Calu3 (cell line): ENCODE measurements at regions of chr6 and their contacts with region 1.

Region 1: GRCh38 chr6:3929281-3929798 is 80.2 kb downstream of the FAM50B start:
- DNase-seq: no peak
- H3K4me3 Mint-ChIP-seq: no peak overlapping the region
- H3K27ac Mint-ChIP-seq: no peak overlapping the region
- H3K4me1 Mint-ChIP-seq: peaks cover 16% of the 10 kb centered on the region
- H3K27me3 Mint-ChIP-seq: no peaks in the 10 kb centered on the region
- CTCF ChIP-seq: no peak

Region 2: DNA sequence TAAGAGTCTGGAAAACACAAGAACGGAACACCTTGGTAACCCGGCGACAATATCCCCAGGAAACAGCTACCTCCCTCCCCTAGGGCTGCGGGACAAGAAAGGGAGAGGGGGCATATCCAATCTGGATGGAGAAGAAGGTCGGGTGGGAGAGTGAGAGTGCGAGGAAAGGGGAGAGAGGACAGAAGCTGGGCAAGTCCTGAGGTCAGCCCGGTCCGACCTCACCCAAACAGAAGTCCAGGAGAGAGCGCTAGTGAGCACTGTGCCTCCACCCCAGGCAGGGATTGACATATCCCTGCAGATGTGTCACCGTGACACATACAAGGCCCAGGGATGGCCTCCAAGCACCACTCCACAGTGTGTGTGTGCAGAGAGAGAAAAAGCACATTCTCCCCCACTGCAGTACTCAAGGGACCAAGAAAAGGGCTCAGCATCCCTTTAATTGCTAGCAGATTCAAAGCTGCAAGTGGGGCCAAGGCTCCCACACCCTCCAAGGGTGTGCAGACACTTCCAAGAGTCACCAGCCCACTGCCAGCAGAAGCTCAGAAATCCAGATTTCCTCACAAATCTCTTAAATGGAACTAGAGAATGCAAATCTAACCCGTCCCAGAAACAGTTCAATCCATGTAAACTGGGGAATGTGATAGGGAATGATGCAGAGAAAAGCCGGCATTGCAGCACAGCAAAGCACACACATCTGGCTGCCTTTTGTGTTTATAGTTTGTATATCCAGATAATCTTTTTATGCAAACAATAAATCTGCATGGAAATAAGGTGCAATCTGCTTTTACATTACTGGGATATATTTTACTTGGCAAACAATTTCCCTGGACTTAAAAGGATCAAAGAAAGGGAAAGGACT is 180.9 kb before region 1 on chr6:
- CTCF ChIA-PET with region 1: interaction called, 10 read pairs
- intact Hi-C with region 1: loop called (anchors 2 kb)
- DNase-seq: peak; percentile 70
- H3K4me3 Mint-ChIP-seq: peak overlapping the region; percentile 85
- H3K27ac Mint-ChIP-seq: peak overlapping the region; percentile 65
- H3K4me1 Mint-ChIP-seq: peaks cover 34% of the 10 kb centered on the region
- H3K27me3 Mint-ChIP-seq: no peaks in the 10 kb centered on the region
- CTCF ChIP-seq: peak; percentile 15

Region 3: DNA sequence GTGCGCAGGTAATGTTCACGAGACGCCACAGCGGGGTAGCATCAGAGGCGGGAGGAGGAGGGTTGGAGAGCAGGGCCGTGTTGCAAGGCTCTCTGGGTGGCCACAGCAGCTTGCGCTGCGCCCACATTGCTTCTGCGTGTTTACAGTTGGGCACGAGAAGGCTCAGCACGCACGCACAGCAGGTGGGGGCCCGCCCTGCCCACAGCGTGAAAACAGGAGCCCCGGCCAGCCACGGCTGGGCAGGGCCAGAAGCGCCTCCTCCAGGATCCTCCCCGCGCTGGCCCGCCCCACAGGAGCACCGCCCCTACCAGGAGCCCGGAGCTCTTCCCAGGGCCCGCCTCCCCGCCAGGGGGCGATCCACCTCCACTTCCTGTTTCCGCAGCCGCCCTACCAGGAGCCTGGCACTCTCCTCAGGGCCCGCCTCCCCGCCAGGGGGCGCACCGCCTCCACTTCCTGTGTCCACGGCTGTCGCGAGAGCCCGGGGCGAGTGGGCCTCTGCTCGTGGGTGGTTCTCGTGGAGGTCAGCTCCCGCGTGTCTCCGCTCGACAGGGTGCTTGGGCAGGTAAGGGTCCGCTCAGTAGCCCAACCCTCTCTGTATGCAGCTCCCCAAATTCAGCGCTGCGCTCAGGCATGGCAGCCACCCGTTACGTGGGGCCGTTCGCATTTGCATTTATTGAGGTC is 80.3 kb before region 1 on chr6 and contains the start of gene FAM50B:
- CTCF ChIA-PET with region 1: interaction called, 31 read pairs
- intact Hi-C with region 1: no loop called
- DNase-seq: peak; percentile 89
- H3K4me3 Mint-ChIP-seq: peak within 1 kb of the TSS; percentile 66
- H3K27ac Mint-ChIP-seq: no peak within 1 kb of the TSS
- H3K4me1 Mint-ChIP-seq: peaks cover 9% of the 10 kb centered on the region
- H3K27me3 Mint-ChIP-seq: no peaks in the 10 kb centered on the region
- CTCF ChIP-seq: peak; percentile 73
- total RNA-seq, gene FAM50B: 5.8 and 7.8 TPM in 2 replicates

Region 4: DNA sequence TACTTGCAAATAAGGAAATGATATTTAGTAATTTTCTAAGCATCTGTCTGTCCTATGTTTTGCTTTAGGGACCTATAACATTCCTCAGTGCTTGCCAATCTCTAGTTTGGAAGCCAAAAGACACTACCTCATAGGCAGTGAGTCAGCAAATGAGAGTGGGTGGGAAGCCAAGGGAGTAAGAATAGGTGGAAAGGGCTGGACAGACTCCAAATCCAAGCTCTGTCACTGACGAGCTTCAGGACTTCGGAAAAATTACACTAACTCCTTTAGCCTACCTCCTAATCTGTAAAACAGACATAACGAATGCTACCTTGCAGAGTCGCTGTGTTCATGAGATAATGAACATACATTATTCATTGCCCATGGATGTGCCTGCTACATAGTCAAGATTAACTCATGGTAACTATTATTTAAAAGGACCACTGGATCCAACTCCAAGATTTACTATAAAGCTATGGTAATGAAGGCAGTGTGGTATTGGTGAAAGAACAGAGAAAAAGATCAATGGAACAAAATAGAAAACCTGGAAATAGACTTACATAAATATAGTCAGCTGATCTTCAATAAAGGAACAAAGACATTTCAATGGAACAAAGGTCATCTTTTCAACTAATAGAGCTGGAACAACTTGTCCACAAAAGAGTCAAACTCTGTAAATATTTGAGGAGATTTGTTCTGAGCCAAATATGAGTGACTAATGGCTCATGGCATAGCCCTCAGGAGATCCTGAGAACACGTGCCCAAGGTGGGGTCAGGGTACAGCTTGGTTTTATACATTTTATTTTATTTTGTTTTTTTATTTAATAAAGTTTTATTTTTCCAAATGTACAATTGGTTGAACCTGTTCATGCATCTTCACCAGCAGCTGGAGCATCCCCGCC is 16.0 kb before region 1 on chr6:
- CTCF ChIA-PET with region 1: interaction called, 13 read pairs
- intact Hi-C with region 1: no loop called
- DNase-seq: peak; percentile 61
- H3K4me3 Mint-ChIP-seq: peak overlapping the region; percentile 46
- H3K27ac Mint-ChIP-seq: peak overlapping the region; percentile 77
- H3K4me1 Mint-ChIP-seq: peaks cover 41% of the 10 kb centered on the region
- H3K27me3 Mint-ChIP-seq: no peaks in the 10 kb centered on the region
- CTCF ChIP-seq: no peak